CD14-positive monocyte (primary cell): ENCODE measurements at regions of chr7 and their contacts with region 1.

Region 1: DNA sequence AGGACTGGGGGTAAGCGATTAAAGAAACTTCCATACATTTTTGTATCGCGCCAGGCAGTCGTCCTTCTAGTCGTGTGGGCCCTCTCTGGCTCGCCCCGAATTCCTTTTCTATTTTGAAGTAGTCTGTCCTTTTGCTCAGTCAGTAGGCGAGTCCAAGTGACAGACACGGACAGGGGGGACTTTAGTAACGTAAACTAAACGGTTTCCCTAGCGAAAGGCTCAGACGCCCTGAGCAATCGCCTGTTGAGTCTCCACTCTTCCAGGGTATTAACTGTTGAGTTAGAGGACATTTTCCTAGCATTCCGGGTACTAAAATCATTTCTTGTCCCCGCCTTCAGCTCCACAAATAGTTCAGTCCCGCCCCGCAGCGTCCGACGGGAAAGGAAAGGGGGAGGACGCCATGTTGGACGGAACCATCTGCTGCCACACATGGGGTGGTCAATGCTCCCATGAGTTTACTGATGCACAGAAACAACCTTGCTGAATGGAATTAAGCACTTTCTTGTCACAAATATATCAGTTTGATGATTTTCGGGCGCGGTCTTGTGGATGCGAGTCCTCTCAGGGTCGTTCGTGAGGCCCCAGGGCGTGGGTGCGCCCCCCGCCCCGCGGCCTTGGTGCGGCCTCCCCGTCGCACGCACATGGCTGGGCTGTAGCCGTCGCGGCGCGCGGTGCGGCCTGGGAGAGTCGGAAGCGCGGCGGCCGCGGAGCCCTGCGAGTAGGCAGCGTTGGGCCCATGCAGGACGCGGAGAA is at the start of gene EIF3B:
- DNase-seq: peak; percentile 88 to 95 (median 94)
- H3K4me3 ChIP-seq: peak within 1 kb of the TSS; percentile 72 to 88 (median 85)
- H3K4me3 Mint-ChIP-seq: peak within 1 kb of the TSS; percentile 86 to 90
- H3K27ac ChIP-seq: peak within 1 kb of the TSS; percentile 88 to 100
- H3K27ac Mint-ChIP-seq: peak within 1 kb of the TSS; percentile 96 to 100 (median 99)
- H3K4me1 ChIP-seq: peaks cover 24 to 31% of the 10 kb centered on the region in 2 donors
- H3K4me1 Mint-ChIP-seq: peaks cover 30% of the 10 kb centered on the region
- H3K27me3 ChIP-seq: no peaks in the 10 kb centered on the region
- H3K27me3 Mint-ChIP-seq: peaks cover 0 to 2% (median 1%) of the 10 kb centered on the region in 3 donors
- CTCF ChIP-seq: no peak
- polyA plus RNA-seq, gene EIF3B: 46.0 to 89.1 (median 69.2) TPM

Region 2: DNA sequence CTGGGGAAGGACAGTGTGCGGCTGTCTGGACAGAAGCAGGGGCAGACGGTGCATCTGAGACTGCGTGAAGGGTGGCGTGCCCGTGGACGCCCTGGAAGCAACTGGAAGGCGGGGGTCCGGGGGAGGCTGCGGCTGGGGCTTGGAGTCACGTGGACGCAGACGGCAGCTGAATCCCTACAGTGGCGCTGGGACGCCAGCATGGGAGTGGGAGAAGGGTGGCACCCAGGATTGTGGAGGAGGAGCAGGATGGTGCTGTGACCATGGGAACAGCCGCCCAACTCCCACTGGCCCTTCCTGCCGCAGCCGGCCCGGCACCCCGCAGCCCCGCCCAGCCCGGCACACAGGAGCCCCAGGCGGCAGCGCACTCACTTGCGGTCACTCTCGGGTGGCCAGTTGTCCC is 859.9 kb before region 1 on chr7:
- intact Hi-C with region 1: loop called in 1 of 2 experiments (anchors 10 kb)
- DNase-seq: no peak
- H3K4me3 ChIP-seq: no peak overlapping the region
- H3K4me3 Mint-ChIP-seq: no peak overlapping the region
- H3K27ac ChIP-seq: no peak overlapping the region
- H3K27ac Mint-ChIP-seq: no peak overlapping the region
- H3K4me1 ChIP-seq: no peaks in the 10 kb centered on the region
- H3K4me1 Mint-ChIP-seq: no peaks in the 10 kb centered on the region
- H3K27me3 ChIP-seq: no peaks in the 10 kb centered on the region
- H3K27me3 Mint-ChIP-seq: no peaks in the 10 kb centered on the region
- CTCF ChIP-seq: no peak

Region 3: GRCh38 chr7:1579481-1580421 is 774.6 kb before region 1 on chr7:
- intact Hi-C with region 1: loop called (anchors 5 to 10 kb)
- DNase-seq: peak; percentile 43 to 60 (median 59)
- H3K4me3 ChIP-seq: no peak overlapping the region
- H3K4me3 Mint-ChIP-seq: no peak overlapping the region
- H3K27ac ChIP-seq: no peak overlapping the region
- H3K27ac Mint-ChIP-seq: no peak overlapping the region
- H3K4me1 ChIP-seq: peaks cover 9 to 11% of the 10 kb centered on the region in 2 donors
- H3K4me1 Mint-ChIP-seq: peaks cover 12% of the 10 kb centered on the region
- H3K27me3 ChIP-seq: no peaks in the 10 kb centered on the region
- H3K27me3 Mint-ChIP-seq: peaks cover 0 to 4% (median 0%) of the 10 kb centered on the region in 3 donors
- CTCF ChIP-seq: peak; percentile 89

Region 4: GRCh38 chr7:2248984-2249694 is 105.2 kb before region 1 on chr7:
- intact Hi-C with region 1: loop called (anchors 5 kb)
- DNase-seq: peak; percentile 49 to 68 (median 54)
- H3K4me3 ChIP-seq: peak overlapping the region in 1 of 3 experiments; percentile 40
- H3K4me3 Mint-ChIP-seq: peak overlapping the region; percentile 66 to 87
- H3K27ac ChIP-seq: peak overlapping the region; percentile 50 to 56
- H3K27ac Mint-ChIP-seq: peak overlapping the region; percentile 66 to 91 (median 85)
- H3K4me1 ChIP-seq: peaks cover 48% of the 10 kb centered on the region in 2 donors
- H3K4me1 Mint-ChIP-seq: peaks cover 53% of the 10 kb centered on the region
- H3K27me3 ChIP-seq: no peaks in the 10 kb centered on the region
- H3K27me3 Mint-ChIP-seq: peaks cover 0 to 3% (median 0%) of the 10 kb centered on the region in 3 donors
- CTCF ChIP-seq: no peak

Region 5: GRCh38 chr7:2299131-2299829 is 55.1 kb before region 1 on chr7:
- intact Hi-C with region 1: no loop called
- DNase-seq: peak in 1 of 3 donors; percentile 55
- H3K4me3 ChIP-seq: peak overlapping the region in 1 of 3 experiments; percentile 44
- H3K4me3 Mint-ChIP-seq: peak overlapping the region in 1 of 2 donors; percentile 76
- H3K27ac ChIP-seq: peak overlapping the region in 1 of 2 donors; percentile 64
- H3K27ac Mint-ChIP-seq: peak overlapping the region in 6 of 7 donors; percentile 11 to 73 (median 64)
- H3K4me1 ChIP-seq: peaks cover 15 to 25% of the 10 kb centered on the region in 2 donors
- H3K4me1 Mint-ChIP-seq: peaks cover 30% of the 10 kb centered on the region
- H3K27me3 ChIP-seq: no peaks in the 10 kb centered on the region
- H3K27me3 Mint-ChIP-seq: peaks cover 0 to 1% (median 0%) of the 10 kb centered on the region in 3 donors
- CTCF ChIP-seq: no peak

Region 6: GRCh38 chr7:2403014-2403717 is 48.8 kb after region 1 on chr7 and contains the start of gene CHST12:
- intact Hi-C with region 1: loop called in 1 of 2 experiments (anchors 5 kb)
- DNase-seq: peak; percentile 89 to 93 (median 89)
- H3K4me3 ChIP-seq: peak within 1 kb of the TSS; percentile 68 to 85 (median 78)
- H3K4me3 Mint-ChIP-seq: peak within 1 kb of the TSS; percentile 82 to 90
- H3K27ac ChIP-seq: peak within 1 kb of the TSS in 1 of 2 donors; percentile 70
- H3K27ac Mint-ChIP-seq: peak within 1 kb of the TSS in 6 of 7 donors; percentile 10 to 66 (median 54)
- H3K4me1 ChIP-seq: peaks cover 66 to 69% of the 10 kb centered on the region in 2 donors
- H3K4me1 Mint-ChIP-seq: peaks cover 67% of the 10 kb centered on the region
- H3K27me3 ChIP-seq: no peaks in the 10 kb centered on the region
- H3K27me3 Mint-ChIP-seq: peaks cover 0 to 1% (median 0%) of the 10 kb centered on the region in 3 donors
- CTCF ChIP-seq: no peak
- polyA plus RNA-seq, gene CHST12: 5.8 to 10.6 (median 7.5) TPM